CD4-positive, alpha-beta T cell (primary cell): ENCODE measurements at regions of chr19 and their contacts with region 1.

Region 1: DNA sequence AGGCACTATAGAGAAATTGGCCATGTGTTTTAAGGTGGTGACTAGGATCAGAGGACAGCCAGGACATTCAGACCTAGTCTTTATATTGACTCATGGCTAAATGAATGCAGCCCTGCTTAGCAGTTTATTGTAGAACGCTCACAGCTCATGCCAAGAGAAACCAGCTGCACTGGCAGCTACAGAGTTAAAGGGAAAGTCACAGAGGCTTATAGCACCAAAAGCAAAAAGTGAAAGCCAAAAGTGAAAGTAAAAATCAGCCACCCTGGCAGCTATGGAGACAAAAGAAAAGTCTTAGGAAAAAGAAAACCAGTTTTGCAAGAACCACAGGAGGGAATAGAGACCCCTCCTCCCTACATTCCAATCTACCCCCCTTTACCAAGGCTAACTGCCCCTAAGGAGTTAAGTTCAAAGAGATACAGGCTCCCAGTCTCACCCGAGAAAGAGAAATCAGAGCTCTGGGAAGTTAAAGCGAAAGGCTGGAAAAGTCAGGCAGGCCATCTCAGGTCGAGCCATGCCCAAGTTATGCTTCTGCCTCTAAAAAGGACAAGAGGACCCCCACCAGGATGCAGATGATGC is 99.0 kb downstream of the ZNF429 start:
- DNase-seq: peak in 3 of 14 experiments; percentile 34 to 59 (median 54)
- ATAC-seq: peak; percentile 84
- H3K4me3 ChIP-seq: peak overlapping the region; percentile 56
- H3K4me3 Mint-ChIP-seq: peak overlapping the region; percentile 94
- H3K27ac ChIP-seq: peak overlapping the region; percentile 12 to 54
- H3K27ac Mint-ChIP-seq: peak overlapping the region; percentile 91
- H3K4me1 ChIP-seq: peaks cover 8% of the 10 kb centered on the region
- H3K4me1 Mint-ChIP-seq: peaks cover 21% of the 10 kb centered on the region
- H3K27me3 ChIP-seq: no peaks in the 10 kb centered on the region
- H3K27me3 Mint-ChIP-seq: no peaks in the 10 kb centered on the region
- CTCF ChIP-seq: no peak

Region 2: DNA sequence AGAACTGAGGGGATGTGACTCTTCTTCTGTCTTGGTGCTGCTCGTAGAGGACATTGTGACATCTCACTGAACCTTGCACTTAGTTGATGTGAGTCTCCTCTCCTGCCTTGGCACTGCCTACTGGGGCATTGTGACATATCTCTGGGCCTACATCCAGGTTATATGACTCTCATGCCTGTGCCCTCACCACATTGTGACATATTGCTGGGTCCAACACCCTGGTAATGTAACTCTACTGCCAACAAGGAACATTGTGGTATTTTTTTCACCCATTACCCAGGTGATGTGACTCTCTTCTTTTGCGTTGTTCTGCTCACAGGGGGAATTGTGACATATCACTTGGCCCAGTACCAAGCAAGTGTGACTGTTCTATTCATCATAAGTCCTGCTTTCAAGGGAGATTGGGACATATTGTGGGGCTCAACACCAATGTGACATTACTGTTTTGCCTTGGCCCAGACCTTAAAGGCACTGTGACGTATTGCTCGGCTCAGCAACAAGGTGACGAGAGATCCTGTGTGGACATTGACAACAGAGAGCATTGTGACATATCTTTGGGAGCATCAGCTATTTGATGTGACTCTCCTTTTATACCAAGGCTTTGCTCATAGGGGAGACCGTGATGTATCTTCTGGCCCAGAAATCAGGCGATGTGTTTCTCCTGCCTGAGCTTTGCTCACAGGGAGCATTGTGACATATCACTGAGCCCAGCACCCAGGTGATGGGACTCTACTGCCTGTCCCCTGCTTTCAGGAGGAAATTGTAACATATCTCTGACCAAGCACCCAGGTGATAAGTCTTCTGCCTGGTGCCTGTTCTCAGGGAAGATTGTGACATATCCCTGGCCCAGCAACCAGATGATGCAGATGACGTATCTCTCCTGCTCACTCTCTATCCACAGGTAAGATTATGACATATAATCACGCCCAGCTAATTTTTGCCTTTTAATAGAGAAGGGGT is 111.2 kb before region 1 on chr19:
- CTCF ChIA-PET with region 1: no interaction called
- POLR2A ChIA-PET with region 1: no interaction called
- intact Hi-C with region 1: no loop called
- DNase-seq: no peak
- ATAC-seq: no peak
- H3K4me3 ChIP-seq: no peak overlapping the region
- H3K4me3 Mint-ChIP-seq: no peak overlapping the region
- H3K27ac ChIP-seq: no peak overlapping the region
- H3K27ac Mint-ChIP-seq: no peak overlapping the region
- H3K4me1 ChIP-seq: no peaks in the 10 kb centered on the region
- H3K4me1 Mint-ChIP-seq: no peaks in the 10 kb centered on the region
- H3K27me3 ChIP-seq: no peaks in the 10 kb centered on the region
- H3K27me3 Mint-ChIP-seq: no peaks in the 10 kb centered on the region
- CTCF ChIP-seq: no peak

Region 3: GRCh38 chr19:21580101-21580500 is 24.3 kb before region 1 on chr19:
- CTCF ChIA-PET with region 1: no interaction called
- POLR2A ChIA-PET with region 1: interaction called, 24 read pairs
- intact Hi-C with region 1: loop called in 1 of 2 experiments (anchors 1 kb)
- DNase-seq: peak in 3 of 14 experiments; percentile 16 to 55 (median 25)
- ATAC-seq: peak; percentile 65
- H3K4me3 ChIP-seq: no peak overlapping the region
- H3K4me3 Mint-ChIP-seq: peak overlapping the region; percentile 23
- H3K27ac ChIP-seq: peak overlapping the region in 1 of 2 donors; percentile 64
- H3K27ac Mint-ChIP-seq: peak overlapping the region; percentile 84
- H3K4me1 ChIP-seq: no peaks in the 10 kb centered on the region
- H3K4me1 Mint-ChIP-seq: peaks cover 51% of the 10 kb centered on the region
- H3K27me3 ChIP-seq: no peaks in the 10 kb centered on the region
- H3K27me3 Mint-ChIP-seq: no peaks in the 10 kb centered on the region
- CTCF ChIP-seq: no peak